ENCODE measurements at regions of chr6 and their contacts with region 1.

Region 1: DNA sequence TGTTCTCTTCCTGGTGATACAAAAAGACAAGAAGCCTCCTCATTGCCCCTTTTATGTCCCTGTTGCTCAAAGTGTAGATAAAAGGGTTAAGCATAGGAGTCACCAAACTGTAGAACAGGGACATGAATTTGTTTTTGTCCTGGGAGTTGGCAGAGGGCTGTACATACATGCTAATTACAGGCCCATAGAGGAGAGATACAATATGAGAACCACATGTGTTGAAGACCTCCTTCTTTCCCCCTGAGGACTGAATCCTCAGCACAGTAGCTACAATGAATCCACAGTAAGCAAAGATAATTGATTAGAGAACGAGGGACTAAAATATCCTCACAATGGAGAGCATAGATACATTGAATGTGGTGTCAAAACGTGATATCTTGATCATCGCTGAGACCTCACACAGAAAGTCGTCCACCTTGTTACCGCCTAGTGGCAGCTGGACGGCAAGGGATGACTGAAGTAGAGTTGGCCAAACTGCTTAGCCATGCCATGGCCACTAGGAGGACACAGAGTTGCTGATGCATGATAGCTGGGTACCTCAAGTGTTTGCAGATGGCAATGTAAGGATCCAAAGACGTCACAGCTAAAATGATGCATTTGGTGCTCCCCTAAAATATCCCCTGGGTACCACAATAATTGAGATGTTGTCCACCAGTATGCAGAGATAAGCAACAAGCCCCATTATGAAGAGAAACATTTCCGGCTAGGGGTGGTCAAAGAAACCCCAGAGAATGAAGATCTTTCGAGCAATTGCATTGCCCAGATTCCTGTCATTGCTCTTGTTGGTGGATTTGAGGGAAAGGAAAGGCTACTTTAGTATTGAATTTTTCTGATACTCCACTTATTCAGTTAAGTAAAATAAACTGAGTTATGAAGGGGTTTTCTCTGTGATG is 15.0 kb downstream of the OR2B3 start:
- DNase-seq: peak; percentile 51
- ATAC-seq: peak; percentile 100
- H3K4me3 ChIP-seq: no peak overlapping the region
- H3K27ac ChIP-seq: no peak overlapping the region
- H3K4me1 ChIP-seq: peaks cover 0 to 3% of the 10 kb centered on the region in 2 experiments; a peak in 1 of 4 replicates
- H3K27me3 ChIP-seq: 0 out of 2 replicates have a peak, but pooled peaks cover 4% of the 10 kb centered on the region
- CTCF ChIP-seq: peak; percentile 87 to 96 (median 92)
- POLR2A ChIP-seq: no peak
- RAD21 ChIP-seq: peak; percentile 55

Region 2: DNA sequence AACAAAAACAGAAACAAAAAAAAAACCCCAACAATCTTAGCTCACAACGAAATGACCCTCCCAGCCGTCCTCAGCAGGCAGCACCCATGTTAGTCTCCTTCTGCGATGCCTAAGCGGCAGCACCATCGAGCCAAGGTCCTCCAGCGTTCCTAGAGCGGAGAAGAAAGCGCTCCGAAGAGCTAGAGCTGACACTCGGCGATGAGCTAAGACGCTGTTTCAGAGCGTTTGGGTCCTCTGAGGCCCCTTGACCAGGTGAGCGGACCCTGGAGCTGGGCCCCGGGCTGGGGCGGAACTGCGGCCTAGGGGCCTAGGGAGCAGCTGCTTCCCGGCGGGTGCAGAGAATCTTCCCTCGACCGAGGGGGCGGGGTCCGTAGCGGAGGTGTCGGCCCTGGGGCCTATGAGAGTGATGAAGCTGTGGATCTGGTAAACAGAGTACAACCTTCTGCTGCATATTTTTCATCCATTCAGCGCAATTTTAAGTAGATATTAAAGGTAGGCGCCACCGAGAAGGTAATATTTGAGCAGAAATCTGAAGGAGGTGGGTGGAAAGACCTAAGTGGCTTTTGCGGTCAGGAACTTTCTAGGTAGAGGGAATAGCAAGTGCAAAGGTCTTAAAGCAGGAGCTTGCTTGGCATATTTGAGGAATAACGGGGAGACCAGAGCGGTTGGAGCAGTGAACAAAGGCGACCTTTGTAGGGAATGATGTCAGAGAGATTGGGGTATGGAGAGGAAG is 804.9 kb before region 1 on chr6 and contains the start of gene ZSCAN26:
- CTCF ChIA-PET with region 1: no interaction called
- POLR2A ChIA-PET with region 1: no interaction called
- RAD21 ChIA-PET with region 1: no interaction called
- intact Hi-C with region 1: no loop called
- DNase-seq: peak; percentile 88
- ATAC-seq: peak; percentile 93
- H3K4me3 ChIP-seq: peak within 1 kb of the TSS; percentile 83 to 86
- H3K27ac ChIP-seq: peak within 1 kb of the TSS; percentile 71
- H3K4me1 ChIP-seq: peaks cover 11 to 39% of the 10 kb centered on the region in 2 experiments
- H3K27me3 ChIP-seq: no peaks in the 10 kb centered on the region
- CTCF ChIP-seq: no peak
- POLR2A ChIP-seq: peak; percentile 75
- RAD21 ChIP-seq: 0 out of 2 replicates have a peak, but pooled peaks have one; percentile 1
- total RNA-seq, gene ZSCAN26: 10.3 TPM

Region 3: DNA sequence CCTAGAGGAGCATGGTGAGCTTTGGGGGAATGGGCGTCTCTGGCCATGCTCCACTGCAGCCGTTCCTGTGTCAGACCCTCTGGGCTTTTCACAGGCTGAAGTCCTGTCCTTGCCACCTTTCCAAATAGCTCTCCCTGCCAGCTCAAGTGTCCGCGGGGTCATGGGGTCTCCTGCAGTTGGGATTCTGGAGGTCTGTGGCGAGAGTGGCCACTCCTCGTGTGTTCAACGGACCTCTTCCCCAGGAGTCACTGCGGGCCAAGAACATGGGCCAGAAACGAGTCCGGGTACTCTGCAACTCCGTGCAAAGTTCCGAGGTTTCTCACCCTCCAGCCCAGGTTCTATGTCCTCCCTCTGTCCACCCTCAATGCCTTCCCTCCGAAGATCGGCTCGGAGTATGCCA is 10.4 kb after region 1 on chr6:
- CTCF ChIA-PET with region 1: interaction called, 10 read pairs
- POLR2A ChIA-PET with region 1: no interaction called
- RAD21 ChIA-PET with region 1: no interaction called
- intact Hi-C with region 1: no loop called
- DNase-seq: no peak
- ATAC-seq: no peak
- H3K4me3 ChIP-seq: no peak overlapping the region
- H3K27ac ChIP-seq: no peak overlapping the region
- H3K4me1 ChIP-seq: no peaks in the 10 kb centered on the region
- H3K27me3 ChIP-seq: no peaks in the 10 kb centered on the region
- CTCF ChIP-seq: no peak
- POLR2A ChIP-seq: no peak
- RAD21 ChIP-seq: no peak